ENCODE measurements at regions of chr2 and their contacts with region 1.

Region 1: DNA sequence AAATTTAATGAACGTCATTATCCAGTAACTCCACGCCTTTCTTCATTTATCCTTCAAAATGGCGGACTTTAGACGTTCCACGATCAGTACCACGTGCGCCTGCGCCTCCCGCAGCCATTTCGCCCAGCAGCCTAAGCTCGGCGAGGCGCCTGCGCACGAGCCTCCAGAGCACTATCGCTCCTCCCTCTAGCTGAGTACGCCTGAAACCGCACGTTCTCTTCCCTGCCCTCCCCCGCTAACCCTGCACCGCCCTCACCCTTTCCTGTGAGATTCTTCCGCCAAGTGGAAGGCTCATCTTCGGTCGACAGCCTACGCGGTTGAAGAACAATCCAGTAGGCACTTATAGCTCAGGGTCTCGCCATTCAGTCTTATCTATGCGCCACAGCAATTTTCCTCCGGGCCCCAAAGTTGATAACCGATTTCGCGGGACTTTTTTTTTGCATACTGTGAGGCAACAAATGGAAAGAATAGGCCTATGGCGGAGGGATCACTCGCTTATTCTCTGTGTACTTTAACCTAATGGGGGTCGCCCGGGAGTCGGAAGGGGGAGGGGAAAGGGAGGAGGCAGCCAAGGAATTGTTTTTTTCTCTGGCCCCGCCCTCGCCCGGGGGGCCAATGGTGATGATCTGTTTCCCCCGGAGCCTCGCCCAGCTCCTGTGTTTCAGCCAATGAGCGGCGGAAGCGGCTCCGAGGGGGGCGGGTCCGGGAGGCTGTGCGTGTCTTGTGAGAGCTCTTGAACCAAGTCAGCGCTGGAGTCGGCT is at the start of gene KDM3A:
- DNase-seq: peak; percentile 99 to 100
- ATAC-seq: peak; percentile 93 to 97 (median 96)
- H3K4me3 ChIP-seq: peak within 1 kb of the TSS; percentile 60 to 94 (median 72)
- H3K27ac ChIP-seq: peak within 1 kb of the TSS; percentile 88 to 100 (median 95)
- H3K4me1 ChIP-seq: peaks cover 18 to 38% (median 32%) of the 10 kb centered on the region in 9 donors
- H3K27me3 ChIP-seq: no peaks in the 10 kb centered on the region
- CTCF ChIP-seq: peak in 2 of 9 donors; percentile 16 to 24
- total RNA-seq, gene KDM3A: 24.8 to 53.7 (median 35.0) TPM

Region 2: DNA sequence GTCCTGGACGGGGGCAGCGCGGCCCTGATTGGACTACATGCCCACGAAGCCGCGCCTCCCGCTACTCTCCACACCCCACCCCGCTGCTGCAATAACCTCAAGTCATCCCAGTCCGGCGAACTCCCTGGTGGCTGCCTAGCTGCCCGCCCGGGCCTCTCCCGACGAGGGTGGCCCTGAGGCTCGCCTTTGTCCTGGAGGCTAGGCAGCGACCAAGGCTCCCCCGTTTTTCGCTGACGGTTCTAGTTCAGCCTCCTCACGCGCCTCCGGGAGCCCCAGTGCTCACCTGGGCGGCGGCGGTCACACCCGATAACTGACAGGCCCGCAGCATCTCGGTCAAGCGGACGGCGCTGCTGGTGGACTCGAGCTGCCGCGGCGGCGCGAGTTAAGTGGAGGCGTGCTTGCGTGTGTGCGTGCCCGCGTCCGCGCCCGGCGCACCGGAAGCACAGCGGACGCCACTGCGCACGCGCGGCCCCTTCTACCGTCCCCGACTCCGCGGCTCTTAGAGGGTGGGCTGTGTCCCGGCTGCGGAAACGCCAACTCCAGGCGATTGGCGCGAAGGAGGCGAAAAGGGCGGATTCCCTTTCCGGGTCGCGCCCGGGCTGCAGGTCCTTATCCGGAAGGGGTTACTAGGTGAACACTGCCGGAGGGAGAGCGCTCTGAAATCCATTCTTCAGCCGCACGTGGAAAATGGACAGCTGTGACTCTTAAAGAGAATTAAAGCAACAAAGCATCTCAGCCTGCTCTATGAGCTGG is 245.6 kb before region 1 on chr2 and contains the start of gene IMMT:
- intact Hi-C with region 1: loop called in 1 of 10 experiments (anchors 5 kb)
- DNase-seq: peak; percentile 97 to 98
- ATAC-seq: peak; percentile 94 to 96 (median 94)
- H3K4me3 ChIP-seq: peak within 1 kb of the TSS; percentile 58 to 99 (median 86)
- H3K27ac ChIP-seq: peak within 1 kb of the TSS; percentile 93 to 100 (median 99)
- H3K4me1 ChIP-seq: peaks cover 6 to 69% (median 55%) of the 10 kb centered on the region in 9 donors
- H3K27me3 ChIP-seq: no peaks in the 10 kb centered on the region
- CTCF ChIP-seq: no peak
- total RNA-seq, gene IMMT: 211 to 333 (median 306) TPM

Region 3: DNA sequence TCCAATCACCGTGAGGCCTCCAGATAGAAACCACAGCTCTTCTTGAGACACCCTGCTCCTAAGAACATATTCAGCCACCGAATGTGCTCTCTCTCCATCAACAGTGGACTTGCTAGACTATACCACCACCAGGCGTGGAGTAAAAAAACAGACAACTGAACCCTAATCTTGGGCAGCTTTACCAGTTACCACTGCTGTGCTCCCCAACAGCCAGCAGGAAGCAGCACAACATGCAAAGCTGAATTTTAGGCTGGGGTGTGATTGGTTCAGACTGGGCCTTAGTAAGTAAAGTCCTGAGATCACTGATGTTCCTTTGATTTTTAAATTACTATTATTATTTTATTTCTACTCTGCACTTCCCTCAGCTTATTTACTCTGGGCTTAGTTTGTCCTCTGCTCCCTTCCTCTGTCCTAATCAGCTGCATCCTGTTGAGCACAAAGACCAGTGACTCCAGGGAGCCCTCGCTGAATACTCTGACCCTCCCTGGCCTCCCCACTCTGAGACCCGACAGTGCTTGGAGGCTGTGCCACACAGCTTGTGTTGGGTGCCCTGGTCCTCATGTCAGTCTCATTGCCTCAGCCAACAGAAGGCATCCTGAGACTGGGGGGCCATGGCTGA is 219.6 kb before region 1 on chr2:
- intact Hi-C with region 1: loop called in 3 of 10 experiments (anchors 5 to 10 kb)
- DNase-seq: peak in 1 of 2 donors; percentile 61
- ATAC-seq: peak in 1 of 8 donors; percentile 15
- H3K4me3 ChIP-seq: no peak overlapping the region
- H3K27ac ChIP-seq: peak overlapping the region in 5 of 10 donors; percentile 46 to 94 (median 90)
- H3K4me1 ChIP-seq: peaks cover 17 to 68% (median 50%) of the 10 kb centered on the region in 9 donors
- H3K27me3 ChIP-seq: no peaks in the 10 kb centered on the region
- CTCF ChIP-seq: peak; percentile 66 to 97 (median 90)

Region 4: DNA sequence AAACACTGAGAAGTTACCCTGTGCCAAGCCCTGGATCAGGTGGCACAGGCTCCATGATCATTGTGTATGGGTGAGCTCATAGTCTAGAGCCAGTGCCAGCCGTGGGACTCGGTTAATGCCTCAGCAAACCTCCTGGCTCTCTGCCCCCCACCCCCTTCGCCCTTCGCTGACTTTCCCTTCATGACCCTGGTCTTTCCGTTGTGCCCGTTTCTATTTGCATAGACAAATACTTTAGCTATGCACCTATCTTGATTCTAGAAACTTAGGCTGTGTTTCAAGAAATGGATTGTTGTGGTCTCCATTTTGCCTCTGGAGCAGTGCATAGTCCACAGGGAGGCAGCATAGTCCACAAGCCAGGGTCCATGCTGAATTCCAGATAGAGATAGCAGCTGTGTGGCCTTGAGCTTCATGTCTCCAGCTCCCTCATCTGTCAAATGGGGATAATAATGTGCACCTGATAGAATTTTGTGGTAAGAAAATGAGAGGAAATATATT is 44.5 kb before region 1 on chr2:
- intact Hi-C with region 1: loop called in 1 of 10 experiments (anchors 5 kb)
- DNase-seq: peak in 1 of 2 donors; percentile 42
- ATAC-seq: peak in 6 of 8 donors; percentile 28 to 56 (median 48)
- H3K4me3 ChIP-seq: no peak overlapping the region
- H3K27ac ChIP-seq: peak overlapping the region in 5 of 10 donors; percentile 2 to 87 (median 37)
- H3K4me1 ChIP-seq: peaks cover 0 to 28% (median 5%) of the 10 kb centered on the region in 9 donors
- H3K27me3 ChIP-seq: no peaks in the 10 kb centered on the region
- CTCF ChIP-seq: peak; percentile 14 to 53 (median 34)

Region 5: DNA sequence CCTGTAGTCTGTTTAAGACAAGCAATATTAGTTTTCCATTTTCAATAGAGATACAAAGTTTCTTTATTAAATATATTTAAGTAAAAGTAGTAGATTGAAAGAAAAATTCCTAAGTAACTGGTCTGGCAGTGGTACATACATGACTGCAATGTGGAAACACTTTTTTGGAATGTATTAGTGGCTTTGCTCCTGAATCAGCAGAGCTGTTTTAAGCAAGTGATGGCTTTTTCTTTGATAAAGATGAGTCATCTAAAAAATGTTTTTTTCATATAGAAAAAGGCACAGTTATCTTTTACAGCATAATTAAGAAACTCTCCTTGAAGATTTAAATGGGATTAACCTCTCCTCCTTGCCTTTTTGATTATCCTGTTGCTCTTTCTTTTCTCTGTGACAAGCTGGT is 35.3 kb after region 1 on chr2:
- intact Hi-C with region 1: no loop called
- DNase-seq: no peak
- ATAC-seq: no peak
- H3K4me3 ChIP-seq: no peak overlapping the region
- H3K27ac ChIP-seq: peak overlapping the region in 2 of 10 donors; percentile 20 to 27
- H3K4me1 ChIP-seq: peaks cover 4 to 47% (median 25%) of the 10 kb centered on the region in 9 donors
- H3K27me3 ChIP-seq: no peaks in the 10 kb centered on the region
- CTCF ChIP-seq: no peak

Region 6: GRCh38 chr2:86492048-86492453 is 51.2 kb after region 1 on chr2:
- intact Hi-C with region 1: loop called in 1 of 10 experiments (anchors 5 kb)
- DNase-seq: no peak
- ATAC-seq: peak in 5 of 8 donors; percentile 11 to 61 (median 43)
- H3K4me3 ChIP-seq: no peak overlapping the region
- H3K27ac ChIP-seq: peak overlapping the region in 6 of 10 donors; percentile 22 to 72 (median 60)
- H3K4me1 ChIP-seq: peaks cover 0 to 42% (median 23%) of the 10 kb centered on the region in 9 donors
- H3K27me3 ChIP-seq: no peaks in the 10 kb centered on the region
- CTCF ChIP-seq: no peak

Region 7: DNA sequence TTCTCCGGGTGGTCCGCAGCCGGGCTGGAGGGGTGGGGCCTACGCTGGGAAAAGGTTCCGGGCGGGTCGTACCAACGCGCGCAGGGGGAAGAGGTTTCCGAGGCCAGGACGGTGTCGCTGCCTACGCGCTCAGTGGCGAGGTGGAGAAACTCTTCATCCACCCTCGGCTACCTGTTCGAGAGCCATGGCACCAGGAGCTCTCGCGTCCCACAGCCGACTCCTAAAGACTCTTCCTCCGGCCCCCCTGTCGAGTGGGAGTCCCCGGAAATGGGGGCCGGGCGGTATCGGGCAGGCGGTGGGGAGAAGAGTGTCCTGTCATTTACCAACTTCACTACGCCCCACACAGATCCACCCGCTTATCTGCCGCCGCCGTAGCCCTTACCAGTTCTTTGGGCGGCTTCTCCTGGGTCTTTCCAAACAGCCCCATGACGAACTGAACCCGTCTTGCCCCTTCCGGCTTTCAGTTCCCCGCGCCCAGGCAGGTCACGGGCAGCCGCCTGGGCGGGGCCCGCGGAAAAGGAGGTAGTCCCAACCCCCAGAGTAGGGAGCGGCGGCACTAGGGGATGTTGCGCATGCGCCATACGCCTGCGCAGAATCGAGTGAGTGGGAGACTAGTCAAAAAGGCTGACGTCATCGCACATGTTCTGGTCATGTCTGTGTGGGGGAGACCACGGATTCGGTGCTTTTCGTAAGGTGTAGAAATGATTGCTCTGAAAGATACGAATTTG is 122.3 kb after region 1 on chr2 and contains the start of gene CHMP3:
- intact Hi-C with region 1: loop called in 2 of 10 experiments (anchors 5 kb)
- DNase-seq: peak; percentile 97 to 98
- ATAC-seq: peak; percentile 97 to 99 (median 98)
- H3K4me3 ChIP-seq: peak within 1 kb of the TSS; percentile 49 to 86 (median 68)
- H3K27ac ChIP-seq: peak within 1 kb of the TSS; percentile 97 to 100 (median 98)
- H3K4me1 ChIP-seq: peaks cover 4 to 51% (median 33%) of the 10 kb centered on the region in 9 donors
- H3K27me3 ChIP-seq: no peaks in the 10 kb centered on the region
- CTCF ChIP-seq: no peak
- total RNA-seq, gene CHMP3: 129 to 180 (median 160) TPM

Measured in heart right ventricle (tissue), 16 donors.